ENCODE measurements at regions of chr11 and their contacts with region 1.

Region 1: GRCh38 chr11:13875643-13876042 is 86.9 kb upstream of the SPON1 start:
- DNase-seq: no peak
- H3K4me3 ChIP-seq: no peak overlapping the region
- H3K27ac ChIP-seq: no peak overlapping the region
- H3K4me1 ChIP-seq: peaks cover 0 to 5% (median 1%) of the 10 kb centered on the region in 4 experiments; a peak in 3 of 7 replicates
- H3K27me3 ChIP-seq: no peaks in the 10 kb centered on the region; a peak in 1 of 7 replicates
- CTCF ChIP-seq: no peak
- EP300 ChIP-seq: no peak
- POLR2A ChIP-seq: no peak
- RAD21 ChIP-seq: no peak

Region 2: DNA sequence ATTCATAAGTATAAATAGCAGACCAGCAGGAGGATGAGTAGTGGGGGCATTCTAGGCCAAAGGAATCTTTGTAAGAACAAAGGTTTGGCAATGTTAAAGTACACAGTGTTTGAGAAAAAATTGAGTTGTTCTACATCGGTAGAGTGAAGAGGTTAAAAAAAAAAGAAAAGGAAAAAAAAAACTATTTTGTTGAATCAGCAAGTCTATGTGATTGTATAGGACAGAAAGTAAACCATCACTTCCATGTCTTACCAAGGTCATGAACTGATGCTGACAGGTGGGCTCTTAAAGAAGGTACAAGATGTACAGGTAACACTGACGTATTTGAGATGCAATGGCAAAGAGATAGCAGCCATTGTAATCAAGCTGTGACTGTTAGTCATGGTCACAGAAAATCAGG is 350.4 kb before region 1 on chr11:
- CTCF ChIA-PET with region 1: no interaction called
- POLR2A ChIA-PET with region 1: no interaction called
- DNase-seq: no peak
- H3K4me3 ChIP-seq: no peak overlapping the region
- H3K27ac ChIP-seq: no peak overlapping the region
- H3K4me1 ChIP-seq: no peaks in the 10 kb centered on the region
- H3K27me3 ChIP-seq: no peaks in the 10 kb centered on the region
- CTCF ChIP-seq: no peak
- EP300 ChIP-seq: no peak
- POLR2A ChIP-seq: no peak
- RAD21 ChIP-seq: no peak

Region 3: GRCh38 chr11:13907678-13908077 is 32.0 kb after region 1 on chr11:
- CTCF ChIA-PET with region 1: interaction called, 14 read pairs
- POLR2A ChIA-PET with region 1: no interaction called
- DNase-seq: no peak
- H3K4me3 ChIP-seq: no peak overlapping the region
- H3K27ac ChIP-seq: no peak overlapping the region
- H3K4me1 ChIP-seq: no peaks in the 10 kb centered on the region
- H3K27me3 ChIP-seq: no peaks in the 10 kb centered on the region
- CTCF ChIP-seq: no peak
- EP300 ChIP-seq: no peak
- POLR2A ChIP-seq: no peak
- RAD21 ChIP-seq: no peak

Region 4: DNA sequence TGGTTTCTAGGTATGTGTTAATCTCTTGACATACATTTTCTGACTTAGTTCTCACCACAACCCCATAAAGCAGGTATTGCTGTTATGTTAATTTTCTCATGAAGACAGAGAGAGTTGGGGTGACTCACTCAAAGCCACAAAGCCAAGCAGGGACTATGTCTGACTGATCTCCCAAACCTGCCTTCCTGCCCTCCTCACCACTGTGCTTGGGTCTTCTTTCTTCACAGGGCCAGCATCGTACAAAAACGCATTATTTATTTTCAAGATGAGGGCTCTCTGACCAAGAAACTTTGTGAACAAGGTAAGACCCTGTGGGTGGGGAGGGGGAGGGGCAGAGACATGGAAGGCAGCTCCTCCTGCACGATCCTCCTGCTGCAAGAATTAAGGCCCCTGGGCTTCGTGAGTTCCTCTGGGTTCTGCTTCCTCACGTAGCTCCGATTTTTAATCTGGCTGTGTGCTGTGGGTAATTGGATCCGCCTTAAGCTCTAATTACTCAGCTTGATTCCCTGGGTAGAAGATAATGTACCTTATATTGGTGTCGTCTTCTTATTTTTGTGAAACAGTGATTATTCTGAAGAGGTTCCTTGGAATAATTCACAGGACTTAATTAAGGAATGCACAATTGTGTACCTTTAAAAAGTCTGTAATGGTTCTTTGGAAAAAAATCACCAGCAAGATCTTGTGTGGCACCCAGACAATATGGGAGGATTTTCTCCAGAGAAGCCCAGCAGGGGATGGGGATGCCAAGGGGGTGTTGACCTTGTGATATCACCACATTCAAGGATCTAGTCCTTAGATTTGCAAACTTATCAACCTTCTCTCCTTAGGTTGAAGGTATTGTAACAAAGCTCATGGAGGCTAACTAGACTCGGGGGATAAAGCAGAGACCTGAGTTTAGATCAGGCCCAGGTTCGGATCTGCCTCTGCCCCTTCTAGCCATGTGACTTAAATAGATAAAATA is 199.8 kb after region 1 on chr11:
- CTCF ChIA-PET with region 1: no interaction called
- POLR2A ChIA-PET with region 1: no interaction called
- DNase-seq: no peak
- H3K4me3 ChIP-seq: no peak overlapping the region
- H3K27ac ChIP-seq: no peak overlapping the region
- H3K4me1 ChIP-seq: peaks cover 0 to 15% (median 6%) of the 10 kb centered on the region in 4 experiments; a peak in 3 of 7 replicates
- H3K27me3 ChIP-seq: no peaks in the 10 kb centered on the region
- CTCF ChIP-seq: no peak
- EP300 ChIP-seq: no peak
- POLR2A ChIP-seq: no peak
- RAD21 ChIP-seq: no peak

Measured in H1 (cell line).